RWPE1 (cell line): ENCODE measurements at regions of chr12 and their contacts with region 1.

Region 1: DNA sequence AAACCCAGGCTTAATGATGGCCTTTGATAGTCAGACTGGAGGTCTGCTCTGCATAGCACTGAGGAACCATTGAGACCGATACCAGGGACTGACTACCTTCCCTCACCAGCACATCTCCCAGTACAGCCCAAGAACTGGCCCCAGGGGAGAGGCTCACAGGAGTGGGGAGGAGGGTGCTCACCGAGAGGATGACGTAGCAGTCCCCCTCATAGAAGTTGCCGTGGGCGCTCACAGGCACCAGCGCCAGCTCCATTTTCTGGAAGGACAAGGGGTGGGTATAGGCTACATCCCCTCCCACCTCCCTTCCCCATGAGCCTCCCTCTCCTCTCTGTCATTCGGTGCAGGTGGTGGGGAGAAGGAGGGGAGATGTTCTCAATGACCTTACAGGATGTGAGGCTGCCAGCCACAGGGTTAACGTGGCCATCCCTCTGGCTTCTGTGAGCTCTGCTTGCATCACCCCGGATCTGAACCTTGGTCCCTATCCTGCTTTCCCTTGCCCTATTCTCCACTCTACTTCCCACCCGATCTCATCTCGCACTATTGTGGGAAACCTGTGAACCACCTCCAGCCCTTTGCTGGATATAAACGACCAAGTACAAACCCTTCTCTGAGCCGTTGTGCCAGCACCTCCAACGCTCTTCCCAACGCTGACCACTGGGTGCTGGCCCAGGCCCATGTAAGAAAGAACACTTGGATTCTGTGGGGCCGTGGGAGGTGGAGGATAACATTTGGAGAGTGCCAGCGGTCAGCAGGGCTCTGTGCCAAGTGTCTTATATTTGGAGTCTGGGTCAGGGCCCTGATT is 4.4 kb downstream of the AVIL start:
- DNase-seq: no peak
- H3K27ac ChIP-seq: no peak overlapping the region
- CTCF ChIP-seq: no peak

Region 2: DNA sequence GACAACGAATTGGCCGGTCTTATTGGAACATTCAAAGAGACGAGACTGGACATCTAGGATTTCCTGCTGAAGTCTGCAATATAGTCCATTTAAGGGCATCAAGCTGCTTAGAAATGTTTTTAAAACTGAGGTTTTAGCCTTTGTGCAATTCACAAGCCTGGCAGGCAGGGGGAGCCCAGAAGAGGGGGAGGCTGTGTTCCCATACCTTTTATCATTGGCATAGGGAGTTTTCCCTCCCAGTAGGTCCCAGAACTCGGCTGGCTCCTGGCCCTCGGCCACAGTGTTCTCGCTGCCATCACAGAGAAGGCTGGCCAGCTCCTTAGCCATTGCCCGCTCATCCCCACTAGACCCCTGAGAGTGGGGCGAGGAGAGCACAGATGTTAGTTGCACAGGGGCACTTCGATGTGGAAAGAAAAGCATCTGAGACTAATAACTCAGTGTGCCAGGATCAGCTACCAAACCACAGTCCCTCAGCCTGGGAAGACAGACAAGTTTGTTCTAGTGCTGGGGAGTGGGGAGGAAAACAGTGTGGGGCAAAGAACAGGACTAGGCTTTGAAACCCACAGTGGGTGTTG is 10.8 kb before region 1 on chr12:
- CTCF ChIA-PET with region 1: interaction called, 12 read pairs
- POLR2A ChIA-PET with region 1: no interaction called
- DNase-seq: peak; percentile 70
- H3K27ac ChIP-seq: peak overlapping the region; percentile 41
- CTCF ChIP-seq: peak; percentile 74

Region 3: GRCh38 chr12:58633479-58633878 is 819.3 kb after region 1 on chr12:
- CTCF ChIA-PET with region 1: no interaction called
- POLR2A ChIA-PET with region 1: no interaction called
- DNase-seq: no peak
- H3K27ac ChIP-seq: no peak overlapping the region
- CTCF ChIP-seq: no peak